ENCODE measurements at regions of chr5 and their contacts with region 1.

Region 1: DNA sequence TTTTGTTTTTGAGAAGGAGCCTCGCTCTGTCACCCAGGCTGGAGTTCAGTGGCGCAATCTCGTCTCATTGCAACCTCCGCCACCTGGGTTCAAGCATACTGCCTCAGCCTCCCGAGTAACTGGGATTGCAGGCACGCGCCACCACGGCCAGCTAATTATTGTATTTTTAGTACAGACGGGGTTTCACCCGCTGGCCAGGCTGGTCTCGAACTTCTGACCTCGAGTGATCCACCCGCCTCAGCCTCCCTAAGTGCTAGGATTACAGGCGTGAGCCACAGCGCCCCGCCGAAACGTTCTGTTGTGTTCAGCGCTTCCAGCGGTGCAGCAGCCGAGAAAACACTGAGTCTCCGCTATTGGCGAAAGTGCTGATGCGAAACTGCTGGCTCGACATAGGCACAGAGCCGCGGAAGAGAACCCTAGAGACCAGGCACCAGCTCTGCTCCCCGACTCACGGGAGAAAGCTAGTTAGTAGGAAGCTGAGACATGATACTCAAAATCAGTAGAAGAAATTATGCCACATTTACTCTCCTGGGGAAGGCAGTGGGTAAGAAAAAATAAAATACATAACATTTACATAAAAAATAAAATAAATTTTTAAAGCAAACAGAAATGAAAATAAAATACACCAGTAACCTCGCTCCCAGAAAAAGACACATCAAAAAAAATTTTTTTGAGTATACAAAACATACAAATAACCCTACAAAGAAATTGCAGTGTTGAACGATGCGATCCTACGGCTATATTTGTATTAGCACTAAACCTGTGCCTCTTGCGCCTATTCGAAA is 31.6 kb downstream of the ANXA2R start:
- DNase-seq: peak; percentile 96
- H3K4me3 Mint-ChIP-seq: peak overlapping the region; percentile 88
- H3K27ac Mint-ChIP-seq: peak overlapping the region; percentile 95
- H3K4me1 Mint-ChIP-seq: peaks cover 36% of the 10 kb centered on the region
- H3K27me3 Mint-ChIP-seq: no peaks in the 10 kb centered on the region

Region 2: DNA sequence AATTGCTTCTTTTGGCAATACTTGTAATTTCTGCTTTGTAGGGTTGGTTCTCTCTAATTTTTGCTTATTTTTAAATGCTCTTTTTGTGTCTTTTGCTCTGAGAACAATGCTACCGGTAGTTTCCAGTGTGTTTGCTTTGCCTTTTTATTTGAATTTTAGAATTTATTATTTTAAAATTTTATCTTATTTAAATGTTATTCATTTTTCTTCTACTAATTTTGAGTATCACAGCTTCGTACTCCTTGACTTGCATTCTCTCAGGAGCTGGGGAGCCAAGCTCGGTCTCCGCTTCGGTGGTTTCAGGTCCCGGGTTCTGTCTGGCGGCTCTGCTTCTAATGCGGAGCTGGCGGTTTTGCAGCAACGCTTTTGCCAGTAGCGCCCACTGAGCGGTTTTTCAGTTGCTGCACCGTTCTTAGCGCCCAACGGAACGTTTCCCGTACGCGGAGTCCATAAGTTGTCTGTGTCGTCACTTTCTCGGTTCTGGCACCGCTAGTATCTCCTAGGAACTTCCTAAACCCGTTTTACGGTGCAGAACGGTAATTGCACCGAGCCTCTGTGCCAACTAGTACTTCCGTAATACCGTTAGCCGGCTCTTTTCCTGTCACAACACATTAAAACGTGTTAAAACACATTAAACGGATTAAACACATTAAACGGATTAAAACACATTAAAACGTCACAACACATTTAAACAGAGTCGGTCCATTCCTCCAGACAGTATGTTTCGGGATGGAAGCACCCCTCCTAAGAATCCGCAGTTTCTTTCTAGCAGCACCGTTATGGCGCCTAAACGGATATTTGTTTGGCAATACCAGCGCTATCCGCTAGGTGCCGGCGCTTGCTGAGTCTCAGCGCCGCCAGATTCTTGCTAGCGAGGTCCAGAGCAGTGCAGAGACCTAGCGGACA is 14.1 kb before region 1 on chr5:
- intact Hi-C with region 1: loop called (anchors 1 kb)
- DNase-seq: peak; percentile 97
- H3K4me3 Mint-ChIP-seq: peak overlapping the region; percentile 96
- H3K27ac Mint-ChIP-seq: peak overlapping the region; percentile 100
- H3K4me1 Mint-ChIP-seq: peaks cover 40% of the 10 kb centered on the region
- H3K27me3 Mint-ChIP-seq: no peaks in the 10 kb centered on the region

Region 3: GRCh38 chr5:43027054-43027785 is 18.7 kb after region 1 on chr5:
- intact Hi-C with region 1: no loop called
- DNase-seq: no peak
- H3K4me3 Mint-ChIP-seq: no peak overlapping the region
- H3K27ac Mint-ChIP-seq: no peak overlapping the region
- H3K4me1 Mint-ChIP-seq: peaks cover 6% of the 10 kb centered on the region
- H3K27me3 Mint-ChIP-seq: no peaks in the 10 kb centered on the region

Region 4: GRCh38 chr5:43040287-43041098 is 31.9 kb after region 1 on chr5 and contains the start of gene ANXA2R:
- intact Hi-C with region 1: loop called (anchors 1 kb)
- DNase-seq: peak; percentile 98
- H3K4me3 Mint-ChIP-seq: peak within 1 kb of the TSS; percentile 94
- H3K27ac Mint-ChIP-seq: peak within 1 kb of the TSS; percentile 96
- H3K4me1 Mint-ChIP-seq: peaks cover 46% of the 10 kb centered on the region
- H3K27me3 Mint-ChIP-seq: no peaks in the 10 kb centered on the region
- total RNA-seq, gene ANXA2R: 1.1 and 1.2 TPM in 2 replicates

Region 5: DNA sequence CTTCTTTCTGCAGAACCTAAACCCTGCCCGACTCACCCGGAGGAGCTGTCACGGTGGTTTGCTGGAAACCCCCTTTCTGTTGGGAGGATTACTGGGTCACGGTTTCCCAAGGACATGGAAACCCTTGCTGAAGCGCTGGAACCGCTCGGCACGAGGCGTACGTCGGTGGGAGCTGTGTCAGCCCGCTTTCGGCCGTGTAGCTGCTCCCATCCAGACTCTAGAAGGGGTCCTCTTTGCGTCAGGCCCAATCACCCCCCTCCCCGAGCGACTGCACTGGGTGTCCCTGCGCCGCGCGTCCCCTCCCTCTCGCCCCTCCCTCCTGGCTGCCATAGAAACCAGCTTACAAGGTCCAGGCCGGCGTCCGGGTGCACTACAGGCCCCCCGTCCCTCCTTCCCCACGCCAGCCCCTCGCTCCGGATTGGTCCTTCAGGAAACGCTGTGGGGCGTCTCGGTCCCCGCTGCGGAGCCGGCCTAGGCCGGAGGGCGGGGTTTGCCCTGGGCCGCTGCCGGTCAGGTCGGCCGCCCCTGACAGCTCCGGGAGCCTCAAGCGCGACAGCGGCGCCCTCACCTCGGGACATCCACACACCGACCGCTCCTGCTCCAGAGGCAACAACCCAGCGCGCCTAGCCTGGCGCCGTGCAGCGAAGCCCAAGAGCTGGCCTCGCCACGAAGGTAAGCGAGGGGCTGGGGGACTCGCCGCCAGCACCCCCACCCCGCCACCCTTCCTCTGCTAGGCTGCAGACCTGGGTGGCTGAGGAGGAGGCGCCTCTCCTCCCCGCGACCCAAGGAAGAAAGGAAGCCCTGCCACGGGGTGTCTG is 183.4 kb after region 1 on chr5 and contains the start of gene NIM1K:
- intact Hi-C with region 1: loop called (anchors 5 kb)
- DNase-seq: peak; percentile 85
- H3K4me3 Mint-ChIP-seq: peak within 1 kb of the TSS; percentile 86
- H3K27ac Mint-ChIP-seq: peak within 1 kb of the TSS; percentile 86
- H3K4me1 Mint-ChIP-seq: peaks cover 31% of the 10 kb centered on the region
- H3K27me3 Mint-ChIP-seq: peaks cover 15% of the 10 kb centered on the region
- total RNA-seq, gene NIM1K: 0.82 and 0.97 TPM in 2 replicates

Measured in activated CD4-positive, alpha-beta T cell treated with anti-CD3 and anti-CD28 coated beads, Interleukin-2, amount 10 ng/mL, durations not matched to agents 24 days and 14 days (primary cell).